ENCODE measurements at regions of chr6 and their contacts with region 1.

Region 1: GRCh38 chr6:76509397-76509796 is 436.9 kb upstream of the IMPG1 start:
- DNase-seq: no peak
- ATAC-seq: no peak
- H3K4me3 ChIP-seq: no peak overlapping the region
- H3K4me3 Mint-ChIP-seq: no peak overlapping the region
- H3K27ac ChIP-seq: no peak overlapping the region
- H3K27ac Mint-ChIP-seq: no peak overlapping the region
- H3K4me1 ChIP-seq: no peaks in the 10 kb centered on the region
- H3K4me1 Mint-ChIP-seq: no peaks in the 10 kb centered on the region
- H3K27me3 ChIP-seq: no peaks in the 10 kb centered on the region
- H3K27me3 Mint-ChIP-seq: no peaks in the 10 kb centered on the region
- CTCF ChIP-seq: no peak

Region 2: GRCh38 chr6:76533661-76534060 is 24.3 kb after region 1 on chr6:
- CTCF ChIA-PET with region 1: no interaction called
- POLR2A ChIA-PET with region 1: no interaction called
- intact Hi-C with region 1: loop called in 1 of 2 experiments (anchors 1 kb)
- DNase-seq: no peak
- ATAC-seq: no peak
- H3K4me3 ChIP-seq: no peak overlapping the region
- H3K4me3 Mint-ChIP-seq: no peak overlapping the region
- H3K27ac ChIP-seq: no peak overlapping the region
- H3K27ac Mint-ChIP-seq: no peak overlapping the region
- H3K4me1 ChIP-seq: no peaks in the 10 kb centered on the region
- H3K4me1 Mint-ChIP-seq: no peaks in the 10 kb centered on the region
- H3K27me3 ChIP-seq: no peaks in the 10 kb centered on the region
- H3K27me3 Mint-ChIP-seq: no peaks in the 10 kb centered on the region
- CTCF ChIP-seq: no peak

Region 3: DNA sequence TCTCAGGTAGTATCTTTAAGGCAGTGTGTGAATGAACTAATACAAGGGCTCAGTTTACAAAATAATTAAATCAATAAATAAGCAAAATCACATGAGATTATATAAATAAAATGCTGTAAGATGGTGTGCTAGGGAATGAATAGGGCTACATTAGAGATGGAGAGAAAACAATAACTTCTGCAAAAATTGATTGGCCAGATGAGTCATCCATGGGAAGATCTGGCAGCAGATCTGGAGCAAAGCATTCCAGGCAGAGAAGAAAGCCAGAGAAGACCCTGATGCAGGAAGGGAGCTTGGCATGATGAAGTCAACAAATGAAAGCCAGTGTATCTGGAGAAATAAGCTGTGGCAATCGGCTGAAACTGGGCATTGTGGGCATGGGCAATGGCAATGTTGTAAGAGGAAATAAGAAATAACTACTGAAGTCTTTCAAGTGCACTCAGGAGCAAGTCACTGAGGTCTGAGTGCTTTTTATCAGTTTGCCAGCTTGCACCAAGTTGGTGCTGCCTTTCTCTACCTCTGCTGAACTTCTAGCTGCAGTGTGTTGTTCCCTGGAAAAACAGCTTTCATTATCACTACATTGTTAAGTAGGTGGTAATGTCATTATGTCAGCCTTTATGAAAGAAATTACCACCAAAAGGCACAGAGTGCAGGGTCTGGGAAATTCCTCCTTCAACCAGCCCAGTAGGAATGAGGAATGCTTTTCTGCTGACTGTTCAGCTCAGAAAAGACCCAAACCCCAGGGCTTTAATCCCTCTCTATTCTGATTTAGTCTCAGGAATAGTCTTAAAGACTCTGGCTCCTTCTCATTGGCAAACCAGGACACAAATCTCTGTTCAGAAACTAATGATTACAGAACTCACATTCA is 722.3 kb after region 1 on chr6:
- CTCF ChIA-PET with region 1: no interaction called
- POLR2A ChIA-PET with region 1: no interaction called
- intact Hi-C with region 1: no loop called
- DNase-seq: no peak
- ATAC-seq: no peak
- H3K4me3 ChIP-seq: no peak overlapping the region
- H3K4me3 Mint-ChIP-seq: no peak overlapping the region
- H3K27ac ChIP-seq: no peak overlapping the region
- H3K27ac Mint-ChIP-seq: no peak overlapping the region
- H3K4me1 ChIP-seq: no peaks in the 10 kb centered on the region
- H3K4me1 Mint-ChIP-seq: no peaks in the 10 kb centered on the region
- H3K27me3 ChIP-seq: no peaks in the 10 kb centered on the region
- H3K27me3 Mint-ChIP-seq: no peaks in the 10 kb centered on the region
- CTCF ChIP-seq: no peak